WTC11 (cell line): ENCODE measurements at regions of chr4 and their contacts with region 1.

Region 1: DNA sequence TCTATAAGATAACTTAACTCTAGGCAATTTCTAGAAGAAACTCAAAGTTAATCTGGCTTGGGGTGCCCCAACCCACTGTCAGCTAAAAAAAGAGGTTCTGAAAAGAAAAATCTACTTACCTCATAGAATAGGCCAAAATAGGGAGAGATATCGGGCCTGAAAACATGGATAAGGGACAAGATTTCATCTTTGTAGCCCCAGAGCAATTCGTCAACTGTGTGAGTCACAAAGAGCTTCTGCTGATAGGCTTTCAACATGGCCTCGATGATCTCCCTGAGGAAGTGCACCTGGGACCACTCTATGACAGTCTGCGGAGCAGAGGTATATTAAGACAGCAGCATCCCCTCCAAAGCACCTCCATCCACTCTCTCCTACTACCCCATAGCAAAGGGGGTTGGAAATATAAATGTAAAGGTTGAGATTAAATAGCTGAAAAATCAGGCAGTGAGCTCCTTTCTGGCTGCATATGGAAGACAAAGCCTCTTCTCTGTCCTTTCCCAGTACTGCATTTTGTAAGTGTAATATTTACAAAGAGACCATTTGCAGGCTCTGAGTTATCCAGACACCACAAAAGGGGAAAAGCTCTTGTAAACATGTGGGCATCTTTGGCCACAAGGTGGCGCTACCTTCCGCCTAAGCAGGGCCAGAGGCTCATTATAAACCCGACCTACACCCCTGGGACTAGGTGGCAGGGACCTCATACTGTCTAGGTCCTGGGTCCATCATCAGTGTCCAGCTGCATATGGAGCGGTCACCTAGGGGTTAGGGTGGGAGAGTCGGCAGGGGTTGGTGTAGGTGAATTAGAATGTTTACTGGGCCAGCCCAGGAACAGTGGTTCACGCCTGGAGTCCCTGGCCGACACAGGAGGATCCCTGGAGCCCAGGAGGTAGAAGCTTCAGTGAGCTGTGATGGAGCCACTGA is 31.5 kb upstream of the NUP54 start:
- DNase-seq: peak; percentile 92
- ATAC-seq: peak; percentile 99
- H3K4me3 Mint-ChIP-seq: no peak overlapping the region
- H3K27ac Mint-ChIP-seq: no peak overlapping the region
- H3K4me1 Mint-ChIP-seq: no peaks in the 10 kb centered on the region
- H3K27me3 Mint-ChIP-seq: no peaks in the 10 kb centered on the region
- CTCF ChIP-seq: peak; percentile 93

Region 2: GRCh38 chr4:76055016-76055415 is 124.6 kb before region 1 on chr4:
- CTCF ChIA-PET with region 1: no interaction called
- POLR2A ChIA-PET with region 1: no interaction called
- DNase-seq: no peak
- ATAC-seq: no peak
- H3K4me3 Mint-ChIP-seq: no peak overlapping the region
- H3K27ac Mint-ChIP-seq: no peak overlapping the region
- H3K4me1 Mint-ChIP-seq: peaks cover 28% of the 10 kb centered on the region
- H3K27me3 Mint-ChIP-seq: peaks cover 2% of the 10 kb centered on the region
- CTCF ChIP-seq: no peak

Region 3: GRCh38 chr4:76251441-76252270 is 72.0 kb after region 1 on chr4 and contains the start of gene FAM47E:
- CTCF ChIA-PET with region 1: interaction called, 10 read pairs
- POLR2A ChIA-PET with region 1: no interaction called
- DNase-seq: peak; percentile 96
- ATAC-seq: peak; percentile 95
- H3K4me3 Mint-ChIP-seq: peak within 1 kb of the TSS; percentile 81
- H3K27ac Mint-ChIP-seq: no peak within 1 kb of the TSS
- H3K4me1 Mint-ChIP-seq: peaks cover 18% of the 10 kb centered on the region
- H3K27me3 Mint-ChIP-seq: peaks cover 50% of the 10 kb centered on the region
- CTCF ChIP-seq: no peak
- total RNA-seq, gene FAM47E: 1.4 to 1.6 TPM (median 1.6 TPM) in 3 replicates

Region 4: DNA sequence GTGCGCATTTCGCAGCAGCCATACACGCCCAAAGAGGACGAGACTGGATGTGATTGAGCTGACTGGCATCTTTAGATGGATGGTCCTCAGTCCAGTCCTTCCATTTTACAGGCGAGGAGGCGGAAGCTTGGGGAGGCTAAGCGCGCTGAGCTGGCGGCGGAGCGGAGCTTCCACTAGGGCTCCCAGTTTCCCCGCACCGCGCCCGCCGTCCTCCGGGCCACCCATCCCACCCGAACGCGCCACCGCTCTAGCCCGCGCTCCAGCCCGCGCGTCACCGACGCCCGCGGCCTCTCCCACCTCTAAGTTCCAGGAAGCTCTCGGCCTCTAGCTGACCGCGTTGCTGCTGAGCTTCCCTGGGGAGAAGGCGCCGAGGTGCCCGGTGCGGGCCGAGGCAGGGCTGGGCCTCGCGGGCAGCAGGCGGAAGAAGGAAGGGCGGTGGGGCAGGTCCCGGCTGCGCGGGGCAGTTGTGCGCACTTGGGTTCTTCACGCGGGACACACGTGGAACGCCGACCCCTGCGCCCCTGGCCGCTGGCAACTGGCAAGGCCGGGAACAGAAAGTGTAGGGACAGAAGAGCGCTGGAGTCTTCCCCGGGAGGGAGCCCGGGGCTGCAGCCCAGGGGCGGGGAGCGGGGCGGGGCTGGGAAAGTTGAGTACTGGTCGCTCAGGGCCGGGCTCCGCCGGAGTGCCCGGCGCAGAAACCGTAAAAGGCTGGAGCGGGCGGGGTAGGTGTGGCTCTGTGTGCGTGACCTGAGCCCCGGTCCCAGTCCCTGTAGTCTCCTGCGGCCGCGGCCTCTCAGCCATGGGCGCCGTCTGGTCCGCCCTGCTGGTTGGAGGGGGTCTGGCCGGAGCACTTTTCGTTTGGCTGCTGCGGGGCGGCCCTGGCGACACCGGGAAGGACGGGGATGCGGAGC is 126.6 kb after region 1 on chr4 and contains the start of gene STBD1:
- CTCF ChIA-PET with region 1: interaction called, 38 read pairs
- POLR2A ChIA-PET with region 1: no interaction called
- DNase-seq: peak; percentile 83
- ATAC-seq: peak; percentile 85
- H3K4me3 Mint-ChIP-seq: peak within 1 kb of the TSS; percentile 84
- H3K27ac Mint-ChIP-seq: no peak within 1 kb of the TSS
- H3K4me1 Mint-ChIP-seq: peaks cover 12% of the 10 kb centered on the region
- H3K27me3 Mint-ChIP-seq: peaks cover 33% of the 10 kb centered on the region
- CTCF ChIP-seq: no peak
- total RNA-seq, gene STBD1: 1.4 to 2.6 TPM (median 2.0 TPM) in 3 replicates